K562 (cell line): ENCODE measurements at regions of chr18 and their contacts with region 1.

Region 1: DNA sequence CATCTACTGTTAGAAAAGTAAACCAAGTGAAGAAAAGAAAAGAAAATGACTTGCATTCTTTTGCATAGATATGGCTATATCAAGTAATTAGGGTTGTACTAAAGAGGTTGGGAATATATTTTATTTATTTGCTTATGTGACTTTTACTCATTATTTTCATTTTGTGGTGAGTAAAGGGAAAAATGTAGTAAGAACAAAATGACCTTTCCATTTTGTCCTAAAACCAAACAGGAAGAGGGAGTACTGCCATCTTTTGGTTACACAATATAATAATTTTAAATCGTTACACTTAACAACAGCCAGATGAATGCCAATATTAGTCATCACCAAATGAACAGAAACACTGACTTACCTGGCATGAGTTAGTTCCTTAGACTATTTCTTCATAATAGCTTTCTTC is 47.3 kb upstream of the NDUFV2 start:
- DNase-seq: peak in 2 of 4 experiments; percentile 41 to 55
- ATAC-seq: peak; percentile 79
- H3K4me3 ChIP-seq: no peak overlapping the region
- H3K27ac ChIP-seq: peak overlapping the region; percentile 49
- H3K4me1 ChIP-seq: peaks cover 0 to 12% of the 10 kb centered on the region in 2 experiments; a peak in 3 of 5 replicates
- H3K27me3 ChIP-seq: no peaks in the 10 kb centered on the region
- CTCF ChIP-seq: peak in 2 of 3 experiments; percentile 39 to 75; a peak in 3 of 6 replicates
- EP300 ChIP-seq: 0 out of 2 replicates have a peak, but pooled peaks have one; percentile 6
- POLR2A ChIP-seq: no peak
- RAD21 ChIP-seq: peak; percentile 84 to 90

Region 2: GRCh38 chr18:8081872-8082553 is 973.2 kb before region 1 on chr18:
- CTCF ChIA-PET with region 1: no interaction called
- POLR2A ChIA-PET with region 1: no interaction called
- in situ Hi-C with region 1: no loop called
- intact Hi-C with region 1: no loop called
- DNase-seq: no peak
- ATAC-seq: no peak
- H3K4me3 ChIP-seq: no peak overlapping the region
- H3K27ac ChIP-seq: no peak overlapping the region
- H3K4me1 ChIP-seq: no peaks in the 10 kb centered on the region
- H3K27me3 ChIP-seq: no peaks in the 10 kb centered on the region
- CTCF ChIP-seq: no peak
- EP300 ChIP-seq: no peak
- POLR2A ChIP-seq: no peak
- RAD21 ChIP-seq: no peak

Region 3: GRCh38 chr18:8696749-8697211 is 358.4 kb before region 1 on chr18:
- CTCF ChIA-PET with region 1: interaction called, 4 read pairs
- POLR2A ChIA-PET with region 1: no interaction called
- in situ Hi-C with region 1: no loop called
- intact Hi-C with region 1: loop called (anchors 10 kb)
- DNase-seq: peak; percentile 74 to 90 (median 86)
- ATAC-seq: peak; percentile 95
- H3K4me3 ChIP-seq: no peak overlapping the region
- H3K27ac ChIP-seq: no peak overlapping the region
- H3K4me1 ChIP-seq: peaks cover 0 to 2% of the 10 kb centered on the region in 2 experiments; a peak in 1 of 5 replicates
- H3K27me3 ChIP-seq: no peaks in the 10 kb centered on the region
- CTCF ChIP-seq: peak; percentile 88 to 94 (median 91)
- EP300 ChIP-seq: no peak
- POLR2A ChIP-seq: no peak
- RAD21 ChIP-seq: peak; percentile 76 to 80

Region 4: GRCh38 chr18:8998481-8999217 is 56.5 kb before region 1 on chr18:
- CTCF ChIA-PET with region 1: no interaction called
- POLR2A ChIA-PET with region 1: interaction called, 3 read pairs
- in situ Hi-C with region 1: no loop called
- intact Hi-C with region 1: loop called (anchors 2 kb)
- DNase-seq: peak in 3 of 4 experiments; percentile 39 to 48 (median 40)
- ATAC-seq: peak; percentile 17; the same call in 2 of the 3 replicates
- H3K4me3 ChIP-seq: no peak overlapping the region
- H3K27ac ChIP-seq: peak overlapping the region; percentile 40; the same call in 2 of the 3 replicates
- H3K4me1 ChIP-seq: peaks cover 14 to 52% of the 10 kb centered on the region in 2 experiments
- H3K27me3 ChIP-seq: no peaks in the 10 kb centered on the region
- CTCF ChIP-seq: no peak
- EP300 ChIP-seq: peak; percentile 76
- POLR2A ChIP-seq: no peak
- RAD21 ChIP-seq: peak in 1 of 2 experiments; percentile 26; a peak in 2 of 4 replicates